ENCODE measurements at regions of chr2 and their contacts with region 1.

Region 1: DNA sequence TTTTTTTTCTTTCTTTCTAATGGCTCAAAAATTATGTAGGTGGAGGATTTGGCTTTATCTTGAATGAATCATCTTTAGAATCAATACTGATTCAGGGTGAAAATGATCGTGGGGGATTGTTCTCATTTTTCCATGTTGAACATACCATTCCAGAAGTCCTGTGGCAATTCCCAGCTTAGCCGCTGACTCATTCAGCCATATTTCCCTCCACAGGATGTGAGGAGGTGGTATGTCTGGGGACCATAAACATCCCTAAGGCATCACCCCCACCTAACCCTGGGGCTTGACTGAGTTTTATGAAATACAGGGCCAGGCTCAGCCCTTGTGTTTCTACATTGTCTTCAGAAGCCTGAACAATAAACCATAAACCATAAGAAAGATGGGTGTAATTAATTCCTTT is 92.7 kb upstream of the FN1 start:
- DNase-seq: no peak
- H3K4me3 ChIP-seq: no peak overlapping the region
- H3K27ac ChIP-seq: no peak overlapping the region
- H3K4me1 ChIP-seq: no peaks in the 10 kb centered on the region
- H3K27me3 ChIP-seq: no peaks in the 10 kb centered on the region
- CTCF ChIP-seq: no peak
- POLR2A ChIP-seq: no peak

Region 2: DNA sequence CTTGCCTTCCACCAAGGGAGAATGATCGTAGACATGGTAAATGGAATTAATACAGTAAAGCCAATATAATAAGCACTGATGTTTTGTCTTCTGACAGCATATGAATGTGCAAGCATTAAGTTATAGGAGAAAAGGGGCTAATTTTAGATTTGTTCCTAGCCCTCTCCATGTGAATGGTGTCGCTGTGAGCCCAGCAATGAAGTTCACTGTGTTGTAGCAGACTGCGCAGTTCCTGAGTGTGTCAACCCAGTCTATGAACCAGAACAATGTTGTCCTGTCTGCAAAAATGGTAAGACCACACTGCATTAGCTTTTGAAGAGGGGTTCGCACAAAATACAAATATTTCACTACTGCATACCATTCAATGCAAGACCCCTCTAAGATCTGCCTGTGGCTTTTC is 1092.1 kb before region 1 on chr2:
- intact Hi-C with region 1: no loop called
- DNase-seq: no peak
- H3K4me3 ChIP-seq: no peak overlapping the region
- H3K27ac ChIP-seq: no peak overlapping the region
- H3K4me1 ChIP-seq: no peaks in the 10 kb centered on the region
- H3K27me3 ChIP-seq: no peaks in the 10 kb centered on the region
- CTCF ChIP-seq: no peak
- POLR2A ChIP-seq: no peak

Region 3: DNA sequence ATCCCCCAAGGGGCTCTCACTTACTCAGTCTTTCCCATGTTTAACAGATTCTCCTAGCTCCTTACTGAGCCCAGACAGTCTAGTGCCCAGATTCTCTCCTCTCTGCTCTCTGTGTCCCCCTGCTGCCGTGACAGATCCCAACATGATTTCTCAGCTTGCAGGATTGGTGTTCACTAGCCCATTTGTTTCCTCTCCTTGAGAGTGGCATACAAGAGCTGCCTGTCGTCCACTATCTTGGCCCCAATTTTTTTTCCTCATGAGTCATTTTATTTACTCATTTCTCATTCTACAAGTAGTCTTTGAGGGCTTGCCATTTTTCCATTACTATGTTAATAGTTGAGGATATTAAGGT is 107.2 kb after region 1 on chr2:
- intact Hi-C with region 1: loop called (anchors 10 kb)
- DNase-seq: no peak
- H3K4me3 ChIP-seq: no peak overlapping the region
- H3K27ac ChIP-seq: no peak overlapping the region
- H3K4me1 ChIP-seq: no peaks in the 10 kb centered on the region
- H3K27me3 ChIP-seq: no peaks in the 10 kb centered on the region
- CTCF ChIP-seq: no peak
- POLR2A ChIP-seq: no peak